ENCODE measurements at regions of chr3 and their contacts with region 1.

Region 1: DNA sequence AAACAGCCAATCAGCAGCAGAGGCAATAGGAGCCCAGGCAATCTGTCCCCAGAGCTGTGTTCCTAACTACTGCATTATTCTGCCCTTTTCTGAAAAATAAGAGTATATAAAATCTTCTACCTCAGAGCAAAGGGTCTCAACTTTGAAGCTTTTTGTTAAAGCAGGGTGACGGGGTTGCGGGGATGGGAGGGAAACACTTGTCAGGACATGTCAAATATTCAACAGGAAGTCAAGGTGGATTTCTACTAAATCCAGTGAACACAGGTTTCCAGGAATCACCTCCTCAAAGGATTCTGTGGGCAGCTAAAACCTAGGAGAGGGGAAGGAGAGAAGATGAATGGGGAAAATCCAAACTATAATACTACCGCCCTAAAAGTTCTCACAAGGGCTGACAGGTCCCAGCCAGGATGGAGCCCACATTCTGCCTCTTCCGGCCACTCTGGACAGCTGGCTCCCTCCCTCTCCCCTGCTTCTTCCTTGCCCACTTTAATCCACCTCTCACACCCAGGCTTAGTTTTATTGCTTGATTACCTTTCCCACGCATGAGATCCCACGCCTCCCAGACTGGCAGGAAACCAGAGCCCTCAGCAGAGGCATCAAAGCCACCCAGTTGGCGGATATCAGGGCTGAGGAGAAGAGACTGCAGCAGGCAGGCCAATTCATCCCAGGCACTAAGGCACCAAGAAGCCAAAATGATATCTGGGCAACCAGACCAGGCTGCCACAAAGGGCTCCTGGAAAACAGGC is 77.2 kb downstream of the OSBPL10 start:
- DNase-seq: peak; percentile 36
- ATAC-seq: peak; percentile 58
- H3K4me3 ChIP-seq: peak overlapping the region in 1 of 5 experiments; percentile 27
- H3K4me3 Mint-ChIP-seq: peak overlapping the region; percentile 67
- H3K27ac ChIP-seq: peak overlapping the region in 1 of 2 donors; percentile 27
- H3K27ac Mint-ChIP-seq: peak overlapping the region; percentile 87
- H3K4me1 ChIP-seq: peaks cover 75 to 77% of the 10 kb centered on the region in 2 donors
- H3K4me1 Mint-ChIP-seq: peaks cover 88% of the 10 kb centered on the region
- H3K27me3 ChIP-seq: no peaks in the 10 kb centered on the region
- H3K27me3 Mint-ChIP-seq: no peaks in the 10 kb centered on the region
- CTCF ChIP-seq: no peak

Region 2: GRCh38 chr3:31804240-31805051 is 99.4 kb before region 1 on chr3:
- CTCF ChIA-PET with region 1: no interaction called
- POLR2A ChIA-PET with region 1: no interaction called
- intact Hi-C with region 1: no loop called
- DNase-seq: no peak
- ATAC-seq: no peak
- H3K4me3 ChIP-seq: no peak overlapping the region
- H3K4me3 Mint-ChIP-seq: no peak overlapping the region
- H3K27ac ChIP-seq: no peak overlapping the region
- H3K27ac Mint-ChIP-seq: peak overlapping the region; percentile 15
- H3K4me1 ChIP-seq: peaks cover 12 to 13% of the 10 kb centered on the region in 2 donors
- H3K4me1 Mint-ChIP-seq: peaks cover 51% of the 10 kb centered on the region
- H3K27me3 ChIP-seq: no peaks in the 10 kb centered on the region
- H3K27me3 Mint-ChIP-seq: no peaks in the 10 kb centered on the region
- CTCF ChIP-seq: no peak

Region 3: DNA sequence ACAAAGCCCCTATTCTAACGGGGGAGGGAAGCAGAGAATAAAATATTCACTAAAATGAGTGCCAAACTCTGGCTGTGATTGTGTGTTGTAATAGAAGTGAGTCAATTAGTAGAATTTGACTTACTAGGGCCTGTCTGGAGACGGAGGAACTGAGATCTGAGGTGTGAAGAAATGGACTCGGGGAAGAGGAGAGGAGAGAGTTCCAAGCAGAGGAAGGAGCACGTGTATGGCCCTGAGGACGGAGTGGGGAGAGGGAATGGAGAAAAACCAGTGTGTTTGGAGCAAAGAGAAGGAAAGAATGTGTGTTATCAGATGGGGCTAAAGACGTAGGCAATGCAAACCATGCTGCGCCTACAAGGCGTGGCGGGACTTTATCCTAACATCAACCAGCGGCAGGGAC is 11.9 kb before region 1 on chr3:
- CTCF ChIA-PET with region 1: interaction called, 3 read pairs
- POLR2A ChIA-PET with region 1: no interaction called
- intact Hi-C with region 1: loop called (anchors 2 kb)
- DNase-seq: no peak
- ATAC-seq: no peak
- H3K4me3 ChIP-seq: no peak overlapping the region
- H3K4me3 Mint-ChIP-seq: peak overlapping the region; percentile 20
- H3K27ac ChIP-seq: no peak overlapping the region
- H3K27ac Mint-ChIP-seq: peak overlapping the region; percentile 15
- H3K4me1 ChIP-seq: peaks cover 54 to 65% of the 10 kb centered on the region in 2 donors
- H3K4me1 Mint-ChIP-seq: peaks cover 87% of the 10 kb centered on the region
- H3K27me3 ChIP-seq: no peaks in the 10 kb centered on the region
- H3K27me3 Mint-ChIP-seq: no peaks in the 10 kb centered on the region
- CTCF ChIP-seq: no peak

Measured in B cell (primary cell).